GM12878 (cell line): ENCODE measurements at regions of chr1 and their contacts with region 1.

Region 1: DNA sequence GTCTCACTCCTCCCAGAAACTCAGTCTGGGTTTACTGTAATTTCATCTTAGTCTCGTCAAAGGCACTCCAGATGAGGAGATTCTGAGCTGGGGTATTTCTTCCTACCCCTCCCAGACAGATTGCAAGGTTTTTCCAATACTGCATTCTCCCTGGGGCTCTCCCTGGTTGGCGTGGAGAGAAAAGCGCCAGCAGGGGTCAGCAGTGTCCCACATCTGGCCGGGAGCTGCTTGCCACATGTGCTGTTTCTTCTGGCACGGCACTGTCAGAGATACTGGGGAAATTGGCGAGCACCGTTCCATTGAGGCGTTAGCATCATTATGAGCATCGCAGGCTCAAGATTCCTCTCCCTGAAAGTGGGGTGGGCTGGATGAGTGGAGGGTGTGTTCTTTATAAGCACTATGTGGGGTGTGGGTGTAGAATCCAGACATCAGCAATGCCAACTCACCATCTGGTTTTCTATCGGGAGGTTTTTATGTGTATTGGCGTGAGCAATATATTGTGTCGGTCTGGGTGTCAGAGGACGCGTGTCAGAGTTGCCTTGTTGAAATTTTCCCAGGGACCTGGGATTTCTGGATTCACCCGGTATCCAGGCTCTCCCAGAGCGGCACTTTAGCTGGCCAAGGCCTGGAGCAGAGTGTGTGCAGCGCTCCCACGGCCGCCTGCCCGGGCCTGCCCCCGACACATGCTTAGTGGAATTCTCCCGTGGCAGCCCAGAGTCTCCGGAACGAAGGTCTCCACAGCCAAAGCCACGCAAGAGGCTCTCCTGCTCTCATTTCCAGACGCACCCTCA is 8.0 kb upstream of the NAV1 start:
- DNase-seq: no peak
- ATAC-seq: peak; percentile 90
- H3K4me3 ChIP-seq: no peak overlapping the region
- H3K27ac ChIP-seq: no peak overlapping the region
- H3K4me1 ChIP-seq: no peaks in the 10 kb centered on the region
- H3K27me3 ChIP-seq: no peaks in the 10 kb centered on the region
- CTCF ChIP-seq: peak; percentile 72 to 83 (median 75)
- EP300 ChIP-seq: no peak
- POLR2A ChIP-seq: no peak
- RAD21 ChIP-seq: peak; percentile 64

Region 2: DNA sequence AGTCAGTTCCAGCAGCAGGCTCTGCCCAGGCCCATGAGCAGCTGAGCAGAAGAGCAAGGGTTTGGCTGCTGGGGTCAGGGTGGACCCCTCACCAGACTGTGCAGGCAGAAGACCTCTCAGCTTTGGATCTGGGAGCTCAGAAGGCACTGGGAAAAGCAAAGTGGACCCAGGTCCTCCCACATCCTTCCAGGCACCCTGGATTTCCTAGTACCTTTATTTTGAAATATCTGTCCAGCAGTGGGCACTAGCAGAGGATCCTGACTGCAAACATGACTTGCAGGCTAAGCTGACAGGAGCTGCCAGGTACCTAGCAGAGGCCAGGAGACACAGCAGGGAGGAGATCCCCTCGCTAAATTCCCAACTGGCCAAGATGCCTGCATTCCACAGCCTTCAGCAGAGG is 75.2 kb before region 1 on chr1:
- CTCF ChIA-PET with region 1: no interaction called
- POLR2A ChIA-PET with region 1: no interaction called
- RAD21 ChIA-PET with region 1: no interaction called
- SMC1A ChIA-PET with region 1: no interaction called
- in situ Hi-C with region 1: no loop called
- intact Hi-C with region 1: no loop called
- DNase-seq: no peak
- ATAC-seq: no peak
- H3K4me3 ChIP-seq: no peak overlapping the region
- H3K27ac ChIP-seq: no peak overlapping the region
- H3K4me1 ChIP-seq: peaks cover 37% of the 10 kb centered on the region
- H3K27me3 ChIP-seq: no peaks in the 10 kb centered on the region
- CTCF ChIP-seq: no peak
- EP300 ChIP-seq: no peak
- POLR2A ChIP-seq: no peak
- RAD21 ChIP-seq: no peak

Region 3: GRCh38 chr1:201517948-201518470 is 12.9 kb before region 1 on chr1:
- CTCF ChIA-PET with region 1: interaction called, 47 read pairs
- POLR2A ChIA-PET with region 1: no interaction called
- RAD21 ChIA-PET with region 1: no interaction called
- SMC1A ChIA-PET with region 1: interaction called, 5 read pairs
- in situ Hi-C with region 1: no loop called
- intact Hi-C with region 1: no loop called
- DNase-seq: no peak
- ATAC-seq: no peak
- H3K4me3 ChIP-seq: no peak overlapping the region
- H3K27ac ChIP-seq: no peak overlapping the region
- H3K4me1 ChIP-seq: no peaks in the 10 kb centered on the region
- H3K27me3 ChIP-seq: no peaks in the 10 kb centered on the region
- CTCF ChIP-seq: no peak
- EP300 ChIP-seq: no peak
- POLR2A ChIP-seq: no peak
- RAD21 ChIP-seq: no peak

Region 4: DNA sequence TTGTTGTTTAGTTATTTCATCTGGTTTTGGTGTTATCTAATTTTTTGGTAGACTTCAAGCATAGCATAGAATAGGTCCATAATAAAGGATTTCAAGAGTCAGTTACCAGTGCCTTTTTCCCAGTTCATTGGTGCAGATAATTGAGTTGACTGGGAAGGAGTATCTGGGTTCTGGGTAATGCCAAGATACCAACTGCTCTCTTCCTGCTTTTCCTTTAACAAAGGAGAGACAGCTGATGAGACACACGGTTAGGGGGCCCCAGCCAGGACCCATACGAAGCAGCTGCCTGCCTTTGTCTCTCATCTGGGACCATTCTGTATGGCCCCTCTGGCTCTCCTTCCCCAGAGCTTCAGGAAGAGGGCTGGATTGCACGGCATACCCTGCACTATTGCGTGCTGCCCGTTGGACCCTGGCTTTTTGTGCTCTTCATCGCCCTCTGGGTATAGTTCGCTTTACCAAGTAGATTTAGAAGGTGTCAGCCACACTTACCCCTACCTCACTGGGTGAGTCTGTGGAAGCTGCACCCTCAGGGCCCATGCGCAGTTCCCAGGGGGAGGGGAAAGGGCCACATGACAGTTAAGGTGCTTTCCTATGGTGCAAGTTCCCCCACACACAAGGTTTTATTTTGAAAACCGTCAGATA is 15.0 kb after region 1 on chr1:
- CTCF ChIA-PET with region 1: interaction called, 25 read pairs
- POLR2A ChIA-PET with region 1: no interaction called
- RAD21 ChIA-PET with region 1: interaction called, 4 read pairs
- SMC1A ChIA-PET with region 1: interaction called, 4 read pairs
- in situ Hi-C with region 1: no loop called
- intact Hi-C with region 1: no loop called
- DNase-seq: peak; percentile 11
- ATAC-seq: peak; percentile 90
- H3K4me3 ChIP-seq: no peak overlapping the region
- H3K27ac ChIP-seq: no peak overlapping the region
- H3K4me1 ChIP-seq: no peaks in the 10 kb centered on the region
- H3K27me3 ChIP-seq: no peaks in the 10 kb centered on the region
- CTCF ChIP-seq: no peak
- EP300 ChIP-seq: no peak
- POLR2A ChIP-seq: no peak
- RAD21 ChIP-seq: no peak

Region 5: DNA sequence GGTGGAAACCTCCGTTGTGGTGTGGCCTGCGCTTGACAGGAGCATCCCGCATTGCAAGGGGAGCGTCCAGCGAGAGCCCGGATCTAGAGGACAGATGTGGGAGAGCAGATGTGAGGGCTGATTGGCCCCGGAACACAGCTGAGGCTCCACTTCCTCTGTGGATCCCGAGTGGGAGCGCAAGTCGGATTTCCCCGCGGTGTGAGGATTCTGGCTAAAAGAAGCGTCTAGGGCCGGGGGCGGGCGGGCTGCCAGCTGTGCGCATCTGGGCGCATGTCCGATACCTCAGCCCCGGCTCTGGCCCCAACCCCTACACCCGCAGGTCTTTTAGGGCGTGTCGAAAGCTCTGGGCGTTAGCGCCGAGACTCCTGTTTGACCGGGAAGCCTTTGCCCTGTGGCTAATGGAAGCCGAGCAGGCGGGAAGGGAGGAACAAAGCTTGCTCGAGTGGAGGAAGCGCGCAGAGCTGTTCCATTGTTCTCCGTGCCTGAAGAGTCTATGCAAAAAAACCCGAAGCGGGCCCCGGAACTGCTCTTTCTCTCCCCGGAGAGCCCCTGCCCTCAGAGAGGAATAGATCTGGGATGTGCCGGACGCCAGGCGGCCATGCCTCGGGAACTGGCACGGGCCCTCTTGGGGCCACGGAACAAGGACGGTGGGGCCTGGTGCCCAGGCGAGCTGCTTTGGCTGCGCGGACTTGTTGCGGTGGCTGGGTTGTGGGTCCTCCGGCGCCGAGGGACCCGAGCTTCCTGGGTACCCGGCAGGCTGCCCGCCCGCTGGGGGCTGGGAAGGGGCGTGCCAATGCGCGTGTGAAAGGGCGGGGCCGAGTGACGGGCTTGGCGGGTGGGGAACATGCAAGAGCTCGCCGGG is 119.1 kb after region 1 on chr1:
- CTCF ChIA-PET with region 1: no interaction called
- POLR2A ChIA-PET with region 1: no interaction called
- RAD21 ChIA-PET with region 1: no interaction called
- SMC1A ChIA-PET with region 1: no interaction called
- in situ Hi-C with region 1: no loop called
- intact Hi-C with region 1: no loop called
- DNase-seq: no peak
- ATAC-seq: peak; percentile 52
- H3K4me3 ChIP-seq: no peak overlapping the region
- H3K27ac ChIP-seq: no peak overlapping the region
- H3K4me1 ChIP-seq: no peaks in the 10 kb centered on the region
- H3K27me3 ChIP-seq: peaks cover 4 to 15% of the 10 kb centered on the region in 2 experiments; a peak in 3 of 4 replicates
- CTCF ChIP-seq: no peak
- EP300 ChIP-seq: no peak
- POLR2A ChIP-seq: no peak
- RAD21 ChIP-seq: no peak

Region 6: GRCh38 chr1:201703621-201704439 is 172.9 kb after region 1 on chr1:
- CTCF ChIA-PET with region 1: interaction called, 27 read pairs
- POLR2A ChIA-PET with region 1: no interaction called
- RAD21 ChIA-PET with region 1: interaction called, 3 read pairs
- SMC1A ChIA-PET with region 1: interaction called, 8 read pairs
- in situ Hi-C with region 1: no loop called
- intact Hi-C with region 1: no loop called
- DNase-seq: no peak
- ATAC-seq: peak; percentile 99
- H3K4me3 ChIP-seq: no peak overlapping the region
- H3K27ac ChIP-seq: no peak overlapping the region
- H3K4me1 ChIP-seq: no peaks in the 10 kb centered on the region
- H3K27me3 ChIP-seq: no peaks in the 10 kb centered on the region
- CTCF ChIP-seq: peak; percentile 83 to 93 (median 93)
- EP300 ChIP-seq: no peak
- POLR2A ChIP-seq: no peak
- RAD21 ChIP-seq: peak; percentile 82

Region 7: GRCh38 chr1:201792534-201793305 is 261.8 kb after region 1 on chr1:
- CTCF ChIA-PET with region 1: interaction called, 20 read pairs
- POLR2A ChIA-PET with region 1: no interaction called
- RAD21 ChIA-PET with region 1: no interaction called
- SMC1A ChIA-PET with region 1: interaction called, 3 read pairs
- in situ Hi-C with region 1: no loop called
- intact Hi-C with region 1: loop called (anchors 2 kb)
- DNase-seq: no peak
- ATAC-seq: peak; percentile 94
- H3K4me3 ChIP-seq: no peak overlapping the region
- H3K27ac ChIP-seq: no peak overlapping the region
- H3K4me1 ChIP-seq: no peaks in the 10 kb centered on the region
- H3K27me3 ChIP-seq: peaks cover 2% of the 10 kb centered on the region in 2 experiments; a peak in 3 of 4 replicates
- CTCF ChIP-seq: peak; percentile 95 to 97 (median 96); a peak in 5 of 6 replicates
- EP300 ChIP-seq: no peak
- POLR2A ChIP-seq: no peak
- RAD21 ChIP-seq: peak; percentile 96